Heart left ventricle (tissue), 16 donors: ENCODE measurements at regions of chr20 and their contacts with region 1.

Region 1: DNA sequence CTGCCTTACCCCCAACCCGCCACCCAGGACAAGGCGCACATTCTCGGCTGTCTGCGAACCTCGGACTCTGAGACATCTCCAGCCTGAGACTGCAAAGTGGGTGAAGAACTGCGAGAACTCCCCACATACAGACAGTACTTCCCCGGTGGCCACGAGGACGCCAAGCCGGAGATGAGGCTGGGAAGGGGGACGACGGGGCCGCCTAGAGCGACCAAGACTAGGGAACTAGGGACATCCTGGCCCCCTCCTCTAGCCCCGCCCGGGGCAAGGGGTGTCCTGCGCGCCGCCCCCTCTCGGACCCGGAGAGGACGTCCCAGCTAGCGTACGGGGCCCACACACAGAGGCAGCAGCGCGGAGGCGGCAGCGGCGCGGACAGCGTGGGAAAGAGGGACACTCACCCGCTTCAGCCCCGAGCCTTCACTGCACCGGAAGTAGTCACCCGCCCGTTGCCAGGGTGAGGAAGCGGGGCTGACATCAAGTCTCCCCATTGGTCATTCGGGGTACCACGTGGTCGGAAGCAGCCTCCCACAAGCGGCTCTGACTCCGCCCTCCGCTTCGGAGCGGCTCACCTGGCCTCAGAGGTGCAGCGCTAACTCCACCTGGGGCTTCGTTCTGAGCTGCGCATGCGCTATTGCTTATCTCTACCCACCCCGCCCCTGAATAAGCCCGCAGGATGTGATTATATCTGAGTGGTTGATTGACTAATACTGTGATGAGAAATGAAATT is at the start of gene TASP1:
- DNase-seq: peak; percentile 95 to 97 (median 96)
- ATAC-seq: peak; percentile 100
- H3K4me3 ChIP-seq: peak within 1 kb of the TSS; percentile 86 to 97 (median 90)
- H3K27ac ChIP-seq: peak within 1 kb of the TSS; percentile 11 to 82 (median 70)
- H3K4me1 ChIP-seq: peaks cover 0 to 12% (median 8%) of the 10 kb centered on the region in 12 donors
- H3K27me3 ChIP-seq: no peaks in the 10 kb centered on the region
- CTCF ChIP-seq: no peak
- POLR2A ChIP-seq: peak in 1 of 2 donors; percentile 70
- total RNA-seq, gene TASP1: 3.5 to 8.6 (median 5.3) TPM

Region 2: DNA sequence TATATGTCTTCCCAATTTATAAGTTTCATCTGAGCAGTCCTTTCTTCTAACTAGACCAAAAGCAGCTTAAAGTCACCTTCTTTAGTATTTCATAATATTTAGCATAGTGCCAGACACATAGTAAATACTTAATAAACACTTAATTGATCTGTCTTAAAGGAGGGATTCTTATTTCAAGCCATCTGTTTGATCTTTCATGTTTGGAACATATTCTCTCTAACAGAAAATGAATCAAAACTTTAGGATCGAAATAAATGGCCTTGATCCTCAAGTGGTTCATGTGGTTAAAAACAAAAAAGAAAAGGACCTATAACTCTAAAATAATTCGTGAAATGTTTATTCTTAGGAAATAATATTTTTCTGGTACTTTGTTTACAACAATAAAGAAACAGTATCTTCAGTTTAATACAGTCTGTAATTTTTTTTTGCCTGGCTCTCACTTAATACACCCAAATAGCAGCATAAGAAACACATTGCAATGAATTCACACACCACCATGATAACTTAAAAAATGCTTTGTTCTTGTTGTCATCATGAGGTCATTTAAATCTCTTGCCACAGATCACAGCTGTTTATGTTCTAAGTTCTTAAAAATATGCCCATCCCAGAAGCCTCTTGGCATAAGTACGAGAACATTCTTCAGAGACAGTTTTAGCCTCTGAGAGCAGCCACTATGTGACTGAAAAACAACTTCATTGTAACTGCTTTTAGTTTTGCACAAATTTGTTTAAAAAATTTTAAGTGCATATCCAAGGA is 98.0 kb after region 1 on chr20:
- intact Hi-C with region 1: loop called in 1 of 10 experiments (anchors 10 kb)
- DNase-seq: no peak
- ATAC-seq: peak; percentile 80 to 87 (median 86)
- H3K4me3 ChIP-seq: no peak overlapping the region
- H3K27ac ChIP-seq: peak overlapping the region in 8 of 12 donors; percentile 0 to 73 (median 46)
- H3K4me1 ChIP-seq: peaks cover 0 to 28% (median 14%) of the 10 kb centered on the region in 12 donors
- H3K27me3 ChIP-seq: no peaks in the 10 kb centered on the region
- CTCF ChIP-seq: no peak
- POLR2A ChIP-seq: no peak

Region 3: DNA sequence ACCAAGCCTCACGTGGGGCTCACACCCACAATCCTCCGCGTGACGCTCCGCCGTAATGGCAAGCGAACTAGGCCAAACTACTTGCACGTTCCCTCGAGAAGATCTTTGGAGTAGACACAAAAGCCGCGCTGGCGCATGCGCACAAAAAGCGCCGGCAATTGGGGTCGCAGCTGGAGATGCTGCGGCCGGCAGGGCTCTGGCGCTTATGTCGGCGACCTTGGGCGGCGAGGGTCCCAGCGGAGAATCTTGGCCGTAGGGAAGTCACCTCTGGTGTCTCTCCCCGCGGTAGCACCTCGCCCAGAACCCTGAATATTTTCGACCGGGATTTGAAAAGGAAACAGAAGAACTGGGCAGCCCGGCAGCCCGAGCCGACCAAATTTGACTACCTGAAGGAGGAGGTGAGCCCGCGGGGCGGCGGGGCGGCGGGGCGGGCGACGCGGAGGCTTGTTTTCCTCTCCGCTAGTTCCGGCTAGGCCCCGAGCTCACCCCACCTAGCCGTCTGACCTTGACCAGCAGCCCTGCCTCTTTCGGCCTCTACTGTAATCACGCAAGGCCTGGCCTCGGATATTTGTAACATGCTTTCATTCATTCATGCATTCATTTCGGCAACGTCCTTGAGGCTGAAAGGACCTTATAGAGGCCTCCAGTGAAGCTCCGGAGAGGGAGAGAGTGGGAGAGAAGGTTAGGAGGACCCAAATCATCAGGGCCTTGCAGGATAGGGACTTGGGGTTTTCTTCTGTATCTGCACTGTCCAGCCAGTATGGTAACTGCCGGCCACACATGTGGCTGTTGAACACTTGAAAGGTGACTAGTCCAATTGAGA is 146.4 kb after region 1 on chr20 and contains the starts of genes ESF1 and NDUFAF5:
- intact Hi-C with region 1: loop called in 2 of 10 experiments (anchors 10 kb)
- DNase-seq: peak; percentile 93 to 96 (median 95)
- ATAC-seq: peak; percentile 96 to 99 (median 98)
- H3K4me3 ChIP-seq: peak within 1 kb of the TSS; percentile 68 to 96 (median 84)
- H3K27ac ChIP-seq: peak within 1 kb of the TSS; percentile 73 to 98 (median 92)
- H3K4me1 ChIP-seq: peaks cover 0 to 43% (median 34%) of the 10 kb centered on the region in 12 donors
- H3K27me3 ChIP-seq: no peaks in the 10 kb centered on the region
- CTCF ChIP-seq: no peak
- POLR2A ChIP-seq: peak in 1 of 2 donors; percentile 64
- total RNA-seq, gene ESF1: 8.9 to 17.8 (median 14.0) TPM
- total RNA-seq, gene NDUFAF5: 34.7 to 72.3 (median 55.5) TPM

Region 4: GRCh38 chr20:13839421-13840092 is 200.9 kb after region 1 on chr20:
- intact Hi-C with region 1: no loop called
- DNase-seq: no peak
- ATAC-seq: no peak
- H3K4me3 ChIP-seq: no peak overlapping the region
- H3K27ac ChIP-seq: peak overlapping the region in 1 of 12 donors; percentile 69
- H3K4me1 ChIP-seq: peaks cover 0 to 5% (median 0%) of the 10 kb centered on the region in 12 donors
- H3K27me3 ChIP-seq: no peaks in the 10 kb centered on the region
- CTCF ChIP-seq: no peak
- POLR2A ChIP-seq: no peak